Activated naive CD4-positive, alpha-beta T cell treated with anti-CD3 and anti-CD28 coated beads for 36 hours (primary cell): ENCODE measurements at regions of chr16 and their contacts with region 1.

Region 1: GRCh38 chr16:89706507-89707263 is 5.2 kb upstream of the SPATA2L start:
- DNase-seq: no peak
- H3K4me3 Mint-ChIP-seq: no peak overlapping the region
- H3K27ac Mint-ChIP-seq: no peak overlapping the region
- H3K4me1 Mint-ChIP-seq: peaks cover 16% of the 10 kb centered on the region
- H3K27me3 Mint-ChIP-seq: no peaks in the 10 kb centered on the region

Region 2: GRCh38 chr16:89476804-89477261 is 229.9 kb before region 1 on chr16:
- CTCF ChIA-PET with region 1: no interaction called
- intact Hi-C with region 1: no loop called
- DNase-seq: no peak
- H3K4me3 Mint-ChIP-seq: no peak overlapping the region
- H3K27ac Mint-ChIP-seq: peak overlapping the region; percentile 38
- H3K4me1 Mint-ChIP-seq: peaks cover 94% of the 10 kb centered on the region
- H3K27me3 Mint-ChIP-seq: no peaks in the 10 kb centered on the region

Region 3: DNA sequence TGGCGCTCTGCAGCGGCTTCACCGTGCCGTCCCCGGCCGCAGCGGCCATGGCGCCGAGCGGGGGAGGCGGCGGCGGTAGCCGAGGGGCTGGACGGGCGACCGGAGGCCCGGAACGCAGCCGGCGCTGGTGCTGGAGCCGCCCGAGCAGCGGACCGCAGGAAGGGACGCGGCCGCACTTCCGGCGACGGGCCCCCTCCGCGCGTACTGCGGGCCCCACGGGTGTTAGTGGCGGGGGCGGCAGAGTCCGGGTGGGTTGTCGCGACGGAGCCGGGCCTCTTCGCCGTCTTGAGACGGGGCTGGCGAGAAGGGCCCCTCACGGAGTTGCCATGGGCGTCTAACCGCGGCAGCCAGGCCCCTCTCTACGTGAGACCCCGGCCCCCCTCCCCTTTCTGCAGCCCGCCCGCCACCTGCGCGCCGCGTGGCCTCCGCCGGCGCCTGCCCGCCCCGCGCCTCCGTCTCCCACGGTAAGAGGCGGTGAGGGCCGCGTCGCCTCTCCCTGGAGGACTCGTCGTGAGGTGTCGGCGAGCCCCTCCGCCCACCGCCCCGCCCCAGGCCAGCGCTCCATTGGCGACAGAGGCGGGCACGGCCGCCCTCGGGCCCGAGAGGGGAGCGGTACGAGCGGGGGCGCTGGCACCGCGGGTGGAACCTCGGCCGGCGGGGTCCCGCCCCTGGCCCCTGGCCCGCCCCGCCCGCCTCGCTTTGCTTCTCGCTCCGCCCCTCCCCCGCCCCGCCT is 14.3 kb after region 1 on chr16 and contains the starts of genes VPS9D1 and ZNF276:
- CTCF ChIA-PET with region 1: interaction called, 20 read pairs
- intact Hi-C with region 1: loop called (anchors 1 kb)
- DNase-seq: peak; percentile 84
- H3K4me3 Mint-ChIP-seq: peak within 1 kb of the TSS; percentile 77
- H3K27ac Mint-ChIP-seq: peak within 1 kb of the TSS; percentile 85
- H3K4me1 Mint-ChIP-seq: peaks cover 43% of the 10 kb centered on the region
- H3K27me3 Mint-ChIP-seq: no peaks in the 10 kb centered on the region
- total RNA-seq, gene VPS9D1: 0.91 to 1.4 TPM
- total RNA-seq, gene ZNF276: 19.8 to 25.3 TPM

Region 4: DNA sequence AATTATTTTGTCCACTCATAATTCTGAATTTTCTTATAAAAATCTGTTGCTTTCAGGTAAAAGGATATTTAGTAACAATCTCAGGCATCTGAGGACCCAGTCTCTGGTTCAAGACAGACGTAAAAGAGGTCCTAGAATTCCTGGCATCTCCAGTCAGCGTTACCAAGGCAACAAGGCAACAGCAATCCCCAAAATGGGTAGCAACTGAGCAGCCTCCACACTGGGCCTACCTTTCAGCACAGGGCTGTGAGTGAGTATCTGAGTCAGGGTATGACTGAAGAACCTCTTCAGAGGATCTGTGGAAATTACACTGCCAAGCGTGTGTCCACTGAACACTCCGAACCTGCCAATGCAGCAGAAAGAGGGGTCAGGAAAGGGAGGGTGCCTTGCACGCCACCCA is 89.0 kb after region 1 on chr16:
- CTCF ChIA-PET with region 1: interaction called, 38 read pairs
- intact Hi-C with region 1: loop called (anchors 1 kb)
- DNase-seq: no peak
- H3K4me3 Mint-ChIP-seq: no peak overlapping the region
- H3K27ac Mint-ChIP-seq: no peak overlapping the region
- H3K4me1 Mint-ChIP-seq: no peaks in the 10 kb centered on the region
- H3K27me3 Mint-ChIP-seq: no peaks in the 10 kb centered on the region

Region 5: DNA sequence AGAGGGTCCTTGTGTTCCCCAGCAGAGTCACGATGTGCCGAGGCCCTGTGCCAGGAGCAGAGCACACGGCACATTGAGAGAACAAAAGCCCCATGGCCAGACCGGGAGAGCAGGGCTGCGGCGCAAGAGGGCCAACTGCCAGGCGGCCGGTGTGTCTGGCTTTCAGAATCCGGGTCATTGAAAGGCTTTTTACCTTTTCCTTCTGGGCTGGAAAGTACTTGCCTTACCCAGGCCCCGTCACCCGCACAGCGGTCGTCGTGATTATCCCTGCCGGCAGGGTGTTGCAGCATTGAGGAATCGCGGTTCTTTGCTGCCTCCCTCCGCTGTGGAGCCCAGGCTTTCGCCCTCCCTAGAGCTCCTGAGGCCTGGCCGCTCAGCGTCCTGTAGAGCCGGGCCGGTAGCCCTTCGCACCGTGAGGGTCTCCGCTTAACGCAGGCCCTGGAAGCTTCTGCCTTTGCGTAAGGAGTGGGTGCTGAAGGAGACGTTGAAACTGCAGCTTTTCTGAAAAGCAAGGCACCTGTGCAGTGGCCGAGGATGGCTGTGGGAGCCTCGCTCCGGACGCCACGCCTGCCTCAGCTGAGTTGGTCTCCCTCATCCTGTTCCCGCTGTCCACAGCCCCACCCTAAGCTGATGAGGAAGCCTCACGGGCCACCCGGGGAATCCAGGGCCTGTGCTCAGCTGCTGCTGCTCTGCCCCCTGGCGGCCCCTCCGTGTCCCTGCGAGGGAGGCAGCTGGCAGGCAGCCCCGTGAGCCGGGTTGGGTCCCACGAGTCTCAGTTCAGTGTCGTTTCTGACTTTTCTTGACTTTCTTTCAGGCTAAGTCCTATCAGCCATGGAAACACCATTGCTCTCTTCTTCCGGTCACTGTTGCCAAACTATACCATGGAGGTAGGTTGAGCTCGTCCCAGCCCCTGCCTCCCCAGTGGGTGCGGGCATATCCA is 203.4 kb after region 1 on chr16:
- CTCF ChIA-PET with region 1: interaction called, 11 read pairs
- intact Hi-C with region 1: loop called (anchors 2 kb)
- DNase-seq: peak; percentile 75
- H3K4me3 Mint-ChIP-seq: no peak overlapping the region
- H3K27ac Mint-ChIP-seq: no peak overlapping the region
- H3K4me1 Mint-ChIP-seq: no peaks in the 10 kb centered on the region
- H3K27me3 Mint-ChIP-seq: no peaks in the 10 kb centered on the region